Head of caudate nucleus (tissue), 42 donors: ENCODE measurements at regions of chr16 and their contacts with region 1.

Region 1: DNA sequence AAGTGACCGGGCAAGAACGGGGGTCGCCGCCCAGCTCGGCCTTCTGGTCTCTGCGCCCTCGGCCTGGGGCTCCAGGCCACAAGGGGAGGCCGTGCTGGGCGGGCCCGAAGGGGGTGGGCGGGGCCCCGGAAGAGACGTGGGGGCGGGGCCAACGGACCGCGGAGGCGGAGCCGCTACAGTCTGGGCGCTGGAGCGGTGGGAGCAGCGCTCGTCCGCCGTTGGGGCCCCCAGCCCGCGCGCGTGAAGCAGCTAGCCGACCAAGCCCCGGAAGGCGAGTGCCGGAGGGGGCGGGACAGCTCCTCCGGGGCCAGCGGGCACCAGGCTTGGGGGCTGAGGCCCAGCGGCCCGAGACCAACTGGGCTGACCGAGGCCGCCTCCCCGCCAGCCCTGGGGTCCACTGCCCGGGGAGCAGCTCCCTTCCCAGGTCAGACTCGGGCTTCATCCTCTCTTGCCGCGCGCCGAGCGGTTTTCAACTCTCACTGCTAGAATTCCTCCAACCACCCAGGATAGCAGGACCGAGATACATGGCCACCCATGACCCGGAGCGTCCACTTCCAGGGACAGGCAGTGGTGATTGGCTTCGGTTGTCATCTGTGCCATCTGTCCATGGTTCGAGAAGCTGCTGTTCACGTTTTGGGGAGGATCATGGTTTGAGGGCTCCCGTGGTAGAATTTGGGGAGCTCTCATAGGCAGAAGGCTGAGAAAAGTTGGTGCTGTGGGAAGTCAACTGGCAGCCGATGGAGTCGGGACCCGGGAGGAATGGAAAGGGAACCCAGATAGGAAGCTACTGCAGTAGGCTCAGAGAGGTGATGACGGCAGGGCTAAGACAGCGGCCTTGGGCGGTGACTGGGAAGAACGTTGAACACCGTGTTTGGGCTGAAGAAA is 44.6 kb upstream of the LCMT1 start:
- DNase-seq: peak in 41 of 42 donors; percentile 55 to 92 (median 79)

Region 2: GRCh38 chr16:25106567-25107465 is 39.8 kb after region 1 on chr16:
- intact Hi-C with region 1: loop called (anchors 5 kb)
- DNase-seq: peak; percentile 88 to 99 (median 96)

Region 3: DNA sequence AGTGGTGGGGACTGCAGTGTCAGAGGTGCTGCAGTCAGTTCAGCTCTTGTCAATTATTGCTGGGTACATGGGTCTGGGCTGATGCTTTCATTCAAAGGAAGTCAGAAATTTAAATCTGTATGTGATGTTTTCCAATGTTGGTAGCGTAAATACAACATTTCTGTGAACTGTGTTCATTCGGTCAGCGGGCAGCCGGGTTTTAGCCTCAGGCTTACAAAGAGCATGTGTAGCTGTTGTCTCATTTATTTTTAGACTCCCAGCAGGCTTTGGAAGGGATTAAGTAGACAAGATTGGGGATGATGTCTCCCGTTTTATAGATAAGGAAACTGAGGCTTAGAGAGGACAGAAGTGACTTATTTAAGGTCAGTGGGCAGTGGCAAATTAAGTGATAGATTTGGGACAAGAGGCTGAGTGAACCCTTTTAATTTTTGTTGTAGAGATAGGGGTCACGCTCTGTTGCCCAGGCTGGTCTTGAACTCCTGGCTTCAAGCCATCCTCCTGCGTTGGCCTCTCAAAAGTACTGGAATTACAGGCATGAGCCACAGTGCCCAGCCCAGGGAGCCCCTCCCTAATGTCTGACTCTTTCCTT is 157.8 kb after region 1 on chr16:
- intact Hi-C with region 1: loop called (anchors 10 kb)
- DNase-seq: no peak